OCI-LY7 (cell line): ENCODE measurements at regions of chr17 and their contacts with region 1.

Region 1: GRCh38 chr17:21058098-21058893 is 15.5 kb upstream of the USP22 start:
- DNase-seq: peak; percentile 38
- H3K4me3 ChIP-seq: no peak overlapping the region
- H3K27ac ChIP-seq: peak overlapping the region; percentile 23
- H3K4me1 ChIP-seq: peaks cover 72% of the 10 kb centered on the region
- CTCF ChIP-seq: 0 out of 2 replicates have a peak, but pooled peaks have one; percentile 17

Region 2: DNA sequence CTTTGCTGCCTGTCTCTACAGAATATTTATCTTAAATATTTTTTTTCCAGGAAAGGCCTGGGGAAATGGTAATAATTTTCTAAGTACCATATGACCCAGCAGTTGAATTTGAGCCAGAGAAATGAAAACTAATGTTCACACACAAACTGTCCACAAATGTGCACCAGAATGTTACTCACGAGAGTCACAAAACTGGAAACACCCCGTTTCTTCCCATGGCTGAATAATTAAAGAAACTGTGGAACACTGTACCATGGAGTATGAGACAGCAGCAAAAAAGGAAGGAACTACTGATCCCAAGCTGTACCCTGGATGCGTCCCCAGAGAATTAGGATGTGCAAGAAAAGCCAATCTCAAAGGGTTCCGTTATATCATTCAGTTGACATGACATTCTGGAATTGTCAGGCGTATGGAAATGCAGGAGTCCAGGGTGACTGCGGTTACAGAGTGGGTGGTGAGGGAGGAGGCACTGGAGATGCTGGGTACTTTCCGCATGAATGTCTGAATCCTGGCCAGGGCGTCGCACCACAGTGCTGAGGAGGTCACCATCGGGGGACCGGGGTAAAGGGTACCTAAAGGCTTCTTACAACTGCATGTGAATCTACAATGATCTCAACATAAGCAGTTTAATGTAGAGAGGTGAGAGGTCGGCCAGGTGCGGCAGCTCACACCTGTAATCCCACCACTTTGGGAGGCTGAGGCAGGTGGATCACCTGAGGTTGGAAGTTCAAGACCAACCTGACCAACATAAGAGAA is 50.0 kb before region 1 on chr17:
- CTCF ChIA-PET with region 1: no interaction called
- POLR2A ChIA-PET with region 1: interaction called, 10 read pairs
- intact Hi-C with region 1: no loop called
- DNase-seq: no peak
- H3K4me3 ChIP-seq: no peak overlapping the region
- H3K27ac ChIP-seq: no peak overlapping the region
- H3K4me1 ChIP-seq: no peaks in the 10 kb centered on the region
- CTCF ChIP-seq: no peak

Region 3: DNA sequence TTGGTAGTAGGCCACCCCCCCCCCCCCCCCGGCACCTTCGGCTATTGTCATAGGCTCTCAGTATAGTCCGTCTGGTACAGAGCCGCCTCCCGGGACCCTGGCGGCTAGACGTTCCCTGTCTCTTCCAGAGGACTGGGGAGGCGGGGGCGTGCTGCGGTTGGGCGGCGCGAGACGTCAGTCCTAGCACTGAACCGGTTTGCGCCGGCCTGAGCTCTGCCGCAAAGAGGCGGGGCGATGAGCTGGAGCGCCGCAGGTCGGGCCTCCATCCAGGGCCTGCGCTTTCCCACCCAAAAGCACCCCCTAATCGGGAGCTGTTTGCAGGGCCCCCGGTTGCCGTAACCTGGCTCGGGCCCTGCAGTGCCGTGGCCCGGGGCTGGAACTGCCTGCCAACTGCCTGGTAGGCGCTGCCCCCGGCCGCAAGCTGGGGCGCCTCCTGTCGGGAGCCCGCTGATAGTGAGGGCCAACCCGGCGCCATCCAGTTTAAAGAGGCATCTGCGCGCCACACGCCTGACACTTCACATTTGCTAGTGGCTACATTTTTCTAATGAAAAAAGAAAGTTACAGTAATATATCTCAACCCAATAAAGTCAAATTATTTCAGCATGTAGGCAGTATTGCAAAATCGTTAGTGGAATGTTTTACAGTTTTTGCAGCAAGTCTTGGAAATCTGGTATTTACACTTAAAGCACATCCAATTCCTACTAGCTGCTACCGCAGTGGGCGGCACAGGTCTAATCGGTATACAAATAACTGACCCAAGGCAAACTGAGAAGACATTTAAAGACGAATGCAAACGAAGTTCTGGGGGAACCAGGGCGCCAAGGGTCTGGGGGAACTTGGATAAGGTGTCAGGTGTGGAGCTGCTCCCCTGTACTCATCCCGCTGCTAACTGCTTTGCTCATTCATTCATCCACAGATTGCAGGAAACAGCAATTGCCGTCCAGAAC is 14.7 kb before region 1 on chr17:
- CTCF ChIA-PET with region 1: interaction called, 17 read pairs
- POLR2A ChIA-PET with region 1: interaction called, 57 read pairs
- intact Hi-C with region 1: loop called (anchors 1 kb)
- DNase-seq: peak; percentile 39
- H3K4me3 ChIP-seq: peak overlapping the region; percentile 66
- H3K27ac ChIP-seq: peak overlapping the region; percentile 86
- H3K4me1 ChIP-seq: peaks cover 30% of the 10 kb centered on the region
- CTCF ChIP-seq: peak; percentile 94

Region 4: GRCh38 chr17:21345236-21345635 is 286.9 kb after region 1 on chr17:
- CTCF ChIA-PET with region 1: no interaction called
- POLR2A ChIA-PET with region 1: no interaction called
- intact Hi-C with region 1: no loop called
- DNase-seq: peak; percentile 41
- H3K4me3 ChIP-seq: peak overlapping the region; percentile 24
- H3K27ac ChIP-seq: peak overlapping the region; percentile 41
- H3K4me1 ChIP-seq: peaks cover 39% of the 10 kb centered on the region
- CTCF ChIP-seq: no peak